Naive thymus-derived CD4-positive, alpha-beta T cell (primary cell): ENCODE measurements at regions of chr9 and their contacts with region 1.

Region 1: GRCh38 chr9:27817747-27818146 is 244.5 kb upstream of the C9orf72 start:
- DNase-seq: no peak
- ATAC-seq: no peak
- H3K4me3 ChIP-seq: no peak overlapping the region
- H3K4me3 Mint-ChIP-seq: no peak overlapping the region
- H3K27ac ChIP-seq: no peak overlapping the region
- H3K27ac Mint-ChIP-seq: no peak overlapping the region
- H3K4me1 ChIP-seq: no peaks in the 10 kb centered on the region
- H3K4me1 Mint-ChIP-seq: no peaks in the 10 kb centered on the region
- H3K27me3 ChIP-seq: no peaks in the 10 kb centered on the region
- H3K27me3 Mint-ChIP-seq: peaks cover 0 to 4% (median 0%) of the 10 kb centered on the region in 5 donors

Region 2: GRCh38 chr9:27108981-27109541 is 708.7 kb before region 1 on chr9 and contains the start of gene TEK:
- CTCF ChIA-PET with region 1: no interaction called
- POLR2A ChIA-PET with region 1: no interaction called
- intact Hi-C with region 1: loop called in 1 of 2 experiments (anchors 10 kb)
- DNase-seq: no peak
- ATAC-seq: no peak
- H3K4me3 ChIP-seq: no peak within 1 kb of the TSS
- H3K4me3 Mint-ChIP-seq: no peak within 1 kb of the TSS
- H3K27ac ChIP-seq: no peak within 1 kb of the TSS
- H3K27ac Mint-ChIP-seq: no peak within 1 kb of the TSS
- H3K4me1 ChIP-seq: no peaks in the 10 kb centered on the region
- H3K4me1 Mint-ChIP-seq: no peaks in the 10 kb centered on the region
- H3K27me3 ChIP-seq: no peaks in the 10 kb centered on the region
- H3K27me3 Mint-ChIP-seq: peaks cover 0 to 13% (median 4%) of the 10 kb centered on the region in 5 donors
- total RNA-seq, gene TEK: not detected